BJ (cell line): ENCODE measurements at regions of chr6 and their contacts with region 1.

Region 1: DNA sequence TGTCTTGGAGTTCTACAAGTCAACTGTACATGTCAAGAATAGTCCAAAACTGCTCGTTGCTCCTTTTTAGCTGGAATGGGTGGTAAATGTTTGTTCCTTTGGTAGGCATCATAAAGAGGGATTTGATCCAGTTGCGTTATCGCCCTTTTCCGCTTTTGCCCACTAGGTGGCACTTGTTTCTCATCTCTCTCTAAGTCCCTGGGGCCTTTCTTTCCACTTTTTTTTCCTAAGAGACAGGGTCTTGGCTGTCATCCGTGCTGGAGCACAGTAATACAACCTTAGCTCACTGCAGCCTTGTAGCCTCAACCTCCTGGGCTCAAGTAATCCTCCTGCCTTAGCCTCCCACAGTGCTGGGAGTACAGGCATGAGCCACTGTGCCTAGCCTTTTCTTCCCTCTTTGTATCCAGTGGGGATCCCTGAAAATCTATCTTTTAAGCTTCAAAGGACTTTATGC is 20.7 kb downstream of the GTPBP2 start:
- DNase-seq: no peak
- H3K4me3 ChIP-seq: no peak overlapping the region
- H3K27me3 ChIP-seq: no peaks in the 10 kb centered on the region
- CTCF ChIP-seq: peak; percentile 85

Region 2: DNA sequence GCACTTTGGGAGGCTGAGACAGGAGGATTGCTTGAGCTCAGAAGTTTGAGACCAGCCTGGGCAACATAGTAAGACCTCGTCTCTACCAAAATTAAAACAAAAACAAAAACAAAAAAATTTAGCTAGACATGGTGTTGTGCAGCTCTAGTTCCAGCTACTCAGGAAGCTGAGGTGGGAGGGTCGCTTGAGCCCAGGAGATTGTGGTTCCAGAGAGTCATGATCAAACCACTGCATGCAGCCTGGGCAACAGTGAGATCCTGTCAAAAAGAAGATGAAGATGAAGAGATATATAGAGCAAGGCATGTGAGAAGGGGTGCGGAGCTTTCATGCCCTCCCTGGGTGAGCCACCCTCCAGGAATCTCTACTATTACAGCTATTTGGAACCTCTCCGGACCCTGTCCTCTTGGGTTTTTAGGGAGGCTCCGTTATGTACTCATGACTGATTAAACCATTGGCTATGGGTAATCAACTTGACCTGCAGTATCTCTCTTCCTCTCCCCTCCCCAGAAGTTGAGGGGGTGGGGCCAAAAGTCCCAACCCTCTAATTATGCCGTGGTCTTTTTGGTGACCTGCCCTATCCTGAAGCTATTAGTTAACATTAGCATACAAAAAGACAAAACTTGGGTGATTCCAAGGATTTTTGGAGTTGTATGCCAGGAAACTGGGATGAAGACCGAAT is 23.3 kb before region 1 on chr6:
- CTCF ChIA-PET with region 1: interaction called, 12 read pairs
- POLR2A ChIA-PET with region 1: no interaction called
- DNase-seq: no peak
- H3K4me3 ChIP-seq: no peak overlapping the region
- H3K27me3 ChIP-seq: no peaks in the 10 kb centered on the region
- CTCF ChIP-seq: no peak

Region 3: DNA sequence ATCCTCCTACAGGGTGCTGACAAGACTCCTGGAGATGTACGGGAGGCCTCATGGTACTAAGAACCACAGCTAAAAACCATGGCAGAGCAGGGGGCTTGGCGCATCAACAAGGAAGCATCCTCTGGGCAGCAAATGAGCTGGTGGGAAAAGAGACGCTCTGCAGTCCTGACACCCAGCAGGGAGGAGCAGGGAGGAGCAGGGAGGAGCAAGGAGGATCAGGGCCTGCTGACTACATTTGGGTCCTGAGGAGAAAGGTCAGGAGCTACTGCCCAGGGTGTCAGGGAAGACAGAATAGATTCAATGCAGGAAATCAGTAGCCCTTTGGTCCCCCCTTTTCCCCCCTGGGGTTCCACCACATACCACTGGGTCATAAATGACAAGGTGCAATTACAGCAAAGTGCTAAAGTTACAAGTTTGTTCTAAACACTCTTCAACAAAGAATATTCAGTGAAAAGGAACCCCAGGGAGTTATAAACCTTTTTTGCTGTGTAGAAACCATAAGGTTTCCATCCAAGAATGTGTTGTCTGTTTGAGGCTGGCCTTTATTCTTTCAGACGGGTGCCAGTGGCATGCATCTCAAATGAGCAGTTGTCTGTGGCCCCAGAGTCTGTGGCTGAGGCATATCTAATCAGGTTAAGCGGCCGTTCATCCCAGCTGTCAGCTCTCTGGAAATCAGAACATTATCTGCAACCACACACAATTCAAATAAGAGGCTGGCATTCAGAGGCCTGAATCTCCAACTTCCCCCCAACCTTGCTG is 1104.2 kb after region 1 on chr6:
- CTCF ChIA-PET with region 1: no interaction called
- POLR2A ChIA-PET with region 1: no interaction called
- DNase-seq: no peak
- H3K4me3 ChIP-seq: no peak overlapping the region
- H3K27me3 ChIP-seq: peaks cover 7% of the 10 kb centered on the region
- CTCF ChIP-seq: no peak